HEK293T (cell line): ENCODE measurements at regions of chr11 and their contacts with region 1.

Region 1: GRCh38 chr11:78645226-78646202 is 70.8 kb upstream of the NARS2 start:
- DNase-seq: peak; percentile 74

Region 2: GRCh38 chr11:78476066-78476465 is 169.4 kb before region 1 on chr11:
- CTCF ChIA-PET with region 1: no interaction called
- POLR2A ChIA-PET with region 1: no interaction called
- DNase-seq: no peak

Region 3: GRCh38 chr11:78656984-78657383 is 11.5 kb after region 1 on chr11:
- CTCF ChIA-PET with region 1: interaction called, 11 read pairs
- POLR2A ChIA-PET with region 1: no interaction called
- DNase-seq: no peak

Region 4: DNA sequence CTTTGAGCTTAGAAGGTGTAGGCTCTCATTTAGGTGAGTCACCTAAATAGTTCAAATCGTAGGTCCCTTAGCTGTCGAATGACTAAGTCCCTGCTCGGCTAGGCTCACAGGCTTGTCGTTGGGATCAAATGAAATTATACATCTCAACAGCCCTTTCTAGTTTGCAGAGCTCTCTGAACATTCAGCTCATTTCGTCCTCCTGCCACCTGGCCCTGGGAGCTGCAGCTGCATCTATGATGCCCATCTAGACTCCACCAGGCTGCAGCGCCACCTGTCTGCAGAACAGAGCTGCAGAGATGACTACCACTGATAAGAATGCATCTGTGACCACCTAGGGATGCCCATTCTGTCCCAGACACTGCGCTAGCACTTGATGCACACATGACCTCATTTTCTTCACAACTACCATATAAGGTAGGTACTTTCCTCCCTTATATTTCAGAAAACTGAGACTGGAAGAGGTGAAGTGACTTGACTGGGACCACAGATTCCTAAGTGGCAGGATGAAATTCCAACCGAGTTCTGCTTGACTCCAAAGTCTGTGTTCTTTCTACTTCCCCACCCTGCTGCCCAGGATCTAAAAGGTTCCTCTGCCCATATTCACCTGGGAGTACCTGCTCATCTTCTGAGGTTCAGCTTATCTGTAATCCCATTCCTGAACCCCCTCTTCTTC is 70.3 kb after region 1 on chr11:
- CTCF ChIA-PET with region 1: interaction called, 80 read pairs
- POLR2A ChIA-PET with region 1: no interaction called
- DNase-seq: peak; percentile 72

Region 5: GRCh38 chr11:78722786-78723185 is 77.3 kb after region 1 on chr11:
- CTCF ChIA-PET with region 1: interaction called, 80 read pairs
- POLR2A ChIA-PET with region 1: no interaction called
- DNase-seq: no peak

Region 6: DNA sequence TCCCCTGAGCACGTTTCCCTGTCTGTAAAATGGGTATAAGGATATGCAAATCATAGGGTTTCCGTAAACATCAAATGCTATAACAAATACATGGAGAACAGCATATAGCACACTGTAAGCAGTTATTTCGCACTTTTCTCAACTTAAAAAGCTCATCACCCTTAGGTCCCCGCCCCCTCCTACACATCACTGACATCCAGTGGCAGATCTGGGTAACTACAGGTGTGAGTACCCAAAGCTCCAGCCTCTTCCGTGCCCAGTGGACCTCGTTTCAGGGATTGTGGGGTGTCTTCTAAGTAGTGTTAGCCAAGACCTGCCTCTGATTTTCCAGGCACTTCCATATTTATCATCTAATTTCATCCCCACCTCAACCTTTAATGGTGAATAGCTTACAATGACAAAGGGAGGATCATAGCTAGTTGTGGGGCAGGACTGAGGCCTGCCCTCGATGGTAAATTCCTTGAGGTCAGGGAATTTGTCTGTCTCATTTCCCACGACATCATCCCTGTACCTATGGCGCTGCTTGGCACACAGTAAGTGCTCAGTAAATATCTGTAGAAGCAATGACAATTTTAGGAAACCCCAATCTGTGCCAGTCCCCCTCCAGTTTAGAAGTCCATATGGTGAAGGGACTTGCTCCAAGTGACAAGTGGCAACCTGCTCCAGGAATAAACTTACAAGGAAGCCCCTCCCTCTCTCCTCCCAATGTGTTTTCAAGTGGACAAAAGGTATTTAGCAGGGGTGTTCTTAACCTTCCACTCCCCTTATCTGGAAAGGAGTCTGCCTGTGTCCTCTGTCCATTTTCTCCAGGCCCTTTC is 454.8 kb after region 1 on chr11:
- CTCF ChIA-PET with region 1: interaction called, 39 read pairs
- POLR2A ChIA-PET with region 1: no interaction called
- DNase-seq: peak; percentile 69